ENCODE measurements at regions of chr7 and their contacts with region 1.

Region 1: GRCh38 chr7:114865564-114865963 is 56.3 kb upstream of the MDFIC start:
- DNase-seq: peak; percentile 29
- ATAC-seq: peak; percentile 81
- H3K4me3 Mint-ChIP-seq: no peak overlapping the region
- H3K27ac Mint-ChIP-seq: no peak overlapping the region
- H3K4me1 Mint-ChIP-seq: peaks cover 10% of the 10 kb centered on the region
- H3K27me3 Mint-ChIP-seq: no peaks in the 10 kb centered on the region
- CTCF ChIP-seq: peak; percentile 92

Region 2: GRCh38 chr7:114026486-114027089 is 839.0 kb before region 1 on chr7:
- CTCF ChIA-PET with region 1: interaction called, 5 read pairs
- POLR2A ChIA-PET with region 1: no interaction called
- intact Hi-C with region 1: loop called (anchors 5 kb)
- DNase-seq: no peak
- ATAC-seq: peak; percentile 49
- H3K4me3 Mint-ChIP-seq: no peak overlapping the region
- H3K27ac Mint-ChIP-seq: no peak overlapping the region
- H3K4me1 Mint-ChIP-seq: no peaks in the 10 kb centered on the region
- H3K27me3 Mint-ChIP-seq: no peaks in the 10 kb centered on the region
- CTCF ChIP-seq: no peak

Region 3: GRCh38 chr7:114439581-114439980 is 426.0 kb before region 1 on chr7:
- CTCF ChIA-PET with region 1: no interaction called
- POLR2A ChIA-PET with region 1: no interaction called
- intact Hi-C with region 1: no loop called
- DNase-seq: no peak
- ATAC-seq: no peak
- H3K4me3 Mint-ChIP-seq: no peak overlapping the region
- H3K27ac Mint-ChIP-seq: no peak overlapping the region
- H3K4me1 Mint-ChIP-seq: no peaks in the 10 kb centered on the region
- H3K27me3 Mint-ChIP-seq: no peaks in the 10 kb centered on the region
- CTCF ChIP-seq: no peak

Region 4: DNA sequence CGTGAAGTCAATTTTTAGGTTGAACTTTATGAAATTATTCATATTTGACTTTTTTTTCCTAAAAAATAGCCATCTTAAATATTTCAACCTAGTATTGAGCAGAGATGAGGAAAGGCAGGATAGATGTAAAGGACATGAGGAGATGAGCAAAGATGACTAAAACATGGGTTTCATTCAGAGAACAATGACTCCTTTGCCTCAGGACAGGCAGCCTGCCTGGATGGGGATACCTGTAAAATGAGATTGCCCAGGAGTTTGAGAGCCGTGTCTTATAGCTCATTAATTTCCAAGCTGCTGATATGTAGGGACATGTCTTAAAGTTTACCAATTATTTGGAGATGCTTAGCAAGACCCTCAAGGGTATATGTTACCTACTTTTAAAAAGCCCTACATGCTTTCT is 187.4 kb before region 1 on chr7:
- CTCF ChIA-PET with region 1: no interaction called
- POLR2A ChIA-PET with region 1: no interaction called
- intact Hi-C with region 1: no loop called
- DNase-seq: no peak
- ATAC-seq: no peak
- H3K4me3 Mint-ChIP-seq: no peak overlapping the region
- H3K27ac Mint-ChIP-seq: no peak overlapping the region
- H3K4me1 Mint-ChIP-seq: no peaks in the 10 kb centered on the region
- H3K27me3 Mint-ChIP-seq: no peaks in the 10 kb centered on the region
- CTCF ChIP-seq: no peak

Region 5: GRCh38 chr7:114930829-114931655 is 65.5 kb after region 1 on chr7:
- CTCF ChIA-PET with region 1: interaction called, 10 read pairs
- POLR2A ChIA-PET with region 1: interaction called, 5 read pairs
- intact Hi-C with region 1: no loop called
- DNase-seq: no peak
- ATAC-seq: peak; percentile 57
- H3K4me3 Mint-ChIP-seq: no peak overlapping the region
- H3K27ac Mint-ChIP-seq: no peak overlapping the region
- H3K4me1 Mint-ChIP-seq: peaks cover 20% of the 10 kb centered on the region
- H3K27me3 Mint-ChIP-seq: no peaks in the 10 kb centered on the region
- CTCF ChIP-seq: no peak

Region 6: DNA sequence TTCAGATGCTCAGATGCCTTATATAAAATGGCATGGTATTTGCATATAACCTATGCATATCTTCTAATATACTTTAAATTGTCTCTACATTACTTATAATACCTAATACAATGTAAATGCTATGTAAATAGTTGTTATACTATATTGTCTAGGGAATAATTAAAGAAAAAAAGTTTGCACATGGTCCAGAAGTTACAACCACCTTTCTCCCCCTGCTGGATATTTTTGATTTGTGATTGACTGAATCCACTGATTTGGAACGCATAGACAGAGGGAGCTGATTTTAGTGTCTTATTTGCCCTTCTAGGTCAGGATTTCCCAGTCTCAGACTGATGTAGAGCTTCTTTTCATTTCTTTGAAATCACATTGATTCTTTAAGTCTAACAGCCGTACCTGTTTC is 88.2 kb after region 1 on chr7:
- CTCF ChIA-PET with region 1: interaction called, 26 read pairs
- POLR2A ChIA-PET with region 1: no interaction called
- intact Hi-C with region 1: no loop called
- DNase-seq: no peak
- ATAC-seq: no peak
- H3K4me3 Mint-ChIP-seq: no peak overlapping the region
- H3K27ac Mint-ChIP-seq: no peak overlapping the region
- H3K4me1 Mint-ChIP-seq: peaks cover 65% of the 10 kb centered on the region
- H3K27me3 Mint-ChIP-seq: no peaks in the 10 kb centered on the region
- CTCF ChIP-seq: no peak

Region 7: GRCh38 chr7:115217373-115217772 is 351.8 kb after region 1 on chr7:
- CTCF ChIA-PET with region 1: interaction called, 88 read pairs
- POLR2A ChIA-PET with region 1: no interaction called
- intact Hi-C with region 1: loop called (anchors 1 kb)
- DNase-seq: no peak
- ATAC-seq: no peak
- H3K4me3 Mint-ChIP-seq: no peak overlapping the region
- H3K27ac Mint-ChIP-seq: no peak overlapping the region
- H3K4me1 Mint-ChIP-seq: no peaks in the 10 kb centered on the region
- H3K27me3 Mint-ChIP-seq: peaks cover 8% of the 10 kb centered on the region
- CTCF ChIP-seq: no peak

Region 8: DNA sequence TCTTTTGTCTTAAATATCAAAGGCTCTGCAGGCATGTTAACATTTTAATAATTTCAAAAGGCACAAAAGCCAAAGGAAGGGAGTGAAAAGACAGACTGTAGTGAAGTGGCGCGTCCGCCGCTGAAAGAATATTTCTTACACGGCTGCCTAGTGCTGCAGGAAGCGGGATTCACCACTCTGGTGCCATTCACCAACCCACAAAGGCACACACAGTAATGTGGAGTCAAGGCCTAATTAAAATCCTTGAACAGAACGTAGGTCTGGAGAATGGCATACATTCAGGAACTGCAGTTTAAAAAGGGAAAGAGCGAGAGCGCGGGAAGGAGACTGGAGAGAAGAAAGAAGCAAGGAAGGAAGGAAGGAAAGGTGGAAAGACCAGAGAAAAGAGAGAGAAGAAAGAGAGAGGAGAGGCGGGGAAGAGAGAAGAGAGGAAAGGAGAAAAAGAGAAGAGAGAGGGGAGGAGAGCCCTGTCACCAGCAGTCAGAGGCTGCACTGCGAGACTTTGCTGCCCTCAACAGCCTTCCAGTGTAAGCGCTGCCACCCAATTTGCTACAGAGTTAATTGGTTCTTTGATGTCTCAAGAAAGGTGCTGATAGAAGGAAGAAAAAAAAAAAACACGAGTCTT is 610.3 kb after region 1 on chr7:
- CTCF ChIA-PET with region 1: interaction called, 4 read pairs
- POLR2A ChIA-PET with region 1: interaction called, 3 read pairs
- intact Hi-C with region 1: loop called (anchors 1 kb)
- DNase-seq: no peak
- ATAC-seq: peak; percentile 31
- H3K4me3 Mint-ChIP-seq: no peak overlapping the region
- H3K27ac Mint-ChIP-seq: no peak overlapping the region
- H3K4me1 Mint-ChIP-seq: peaks cover 10% of the 10 kb centered on the region
- H3K27me3 Mint-ChIP-seq: peaks cover 25% of the 10 kb centered on the region
- CTCF ChIP-seq: no peak

Region 9: DNA sequence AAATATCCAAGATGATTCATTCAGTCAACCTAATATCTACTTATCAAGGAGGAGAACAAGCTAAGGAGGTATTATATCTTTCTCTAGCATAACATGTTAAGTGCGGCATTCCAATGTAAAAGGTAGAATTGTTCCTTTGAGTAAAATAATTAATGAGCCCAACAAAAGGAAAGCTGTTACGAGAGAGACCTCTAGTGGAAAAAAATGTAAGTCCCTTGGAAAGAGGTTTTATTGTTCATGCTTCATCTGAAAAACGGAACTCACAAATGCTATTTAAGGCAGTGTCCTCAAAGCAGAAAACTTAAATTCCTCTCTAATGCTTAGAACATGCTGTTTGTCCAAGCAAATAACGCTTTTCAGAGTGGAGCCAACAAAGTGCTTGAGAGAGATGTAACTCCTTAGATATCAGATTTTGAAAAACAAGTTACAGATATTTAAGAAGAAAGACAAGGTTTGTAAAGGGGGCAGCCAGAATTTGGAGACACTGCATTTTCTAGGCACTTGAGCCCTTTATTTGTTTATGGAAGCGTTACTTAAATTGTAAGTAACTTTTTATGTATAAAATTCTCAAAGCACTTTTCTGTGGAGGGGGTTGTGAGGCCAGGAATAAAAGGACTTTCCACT is 1045.1 kb after region 1 on chr7:
- CTCF ChIA-PET with region 1: interaction called, 3 read pairs
- POLR2A ChIA-PET with region 1: no interaction called
- intact Hi-C with region 1: loop called (anchors 1 kb)
- DNase-seq: no peak
- ATAC-seq: peak; percentile 37
- H3K4me3 Mint-ChIP-seq: no peak overlapping the region
- H3K27ac Mint-ChIP-seq: no peak overlapping the region
- H3K4me1 Mint-ChIP-seq: peaks cover 4% of the 10 kb centered on the region
- H3K27me3 Mint-ChIP-seq: peaks cover 4% of the 10 kb centered on the region
- CTCF ChIP-seq: no peak